Endothelial cell of umbilical vein (primary cell): ENCODE measurements at regions of chr12 and their contacts with region 1.

Region 1: GRCh38 chr12:7933255-7933729 is 2.7 kb downstream of the SLC2A3 start:
- DNase-seq: peak; percentile 93
- H3K4me3 ChIP-seq: peak overlapping the region in 2 of 3 experiments; percentile 22 to 26
- H3K27ac ChIP-seq: peak overlapping the region; percentile 88
- H3K4me1 ChIP-seq: peaks cover 37% of the 10 kb centered on the region
- H3K27me3 ChIP-seq: no peaks in the 10 kb centered on the region
- CTCF ChIP-seq: peak; percentile 58 to 80
- POLR2A ChIP-seq: no peak

Region 2: GRCh38 chr12:7758758-7759140 is 174.5 kb before region 1 on chr12:
- CTCF ChIA-PET with region 1: no interaction called
- POLR2A ChIA-PET with region 1: no interaction called
- dilution Hi-C with region 1: no loop called
- intact Hi-C with region 1: no loop called
- DNase-seq: no peak
- H3K4me3 ChIP-seq: no peak overlapping the region
- H3K27ac ChIP-seq: no peak overlapping the region
- H3K4me1 ChIP-seq: no peaks in the 10 kb centered on the region
- H3K27me3 ChIP-seq: no peaks in the 10 kb centered on the region
- CTCF ChIP-seq: no peak
- POLR2A ChIP-seq: no peak

Region 3: GRCh38 chr12:7781283-7781682 is 152.0 kb before region 1 on chr12:
- CTCF ChIA-PET with region 1: no interaction called
- POLR2A ChIA-PET with region 1: no interaction called
- dilution Hi-C with region 1: no loop called
- intact Hi-C with region 1: no loop called
- DNase-seq: no peak
- H3K4me3 ChIP-seq: no peak overlapping the region
- H3K27ac ChIP-seq: no peak overlapping the region
- H3K4me1 ChIP-seq: no peaks in the 10 kb centered on the region
- H3K27me3 ChIP-seq: peaks cover 0 to 2% of the 10 kb centered on the region in 2 experiments
- CTCF ChIP-seq: no peak
- POLR2A ChIP-seq: no peak

Region 4: GRCh38 chr12:7859552-7859951 is 73.7 kb before region 1 on chr12:
- CTCF ChIA-PET with region 1: interaction called, 10 read pairs
- POLR2A ChIA-PET with region 1: no interaction called
- dilution Hi-C with region 1: no loop called
- intact Hi-C with region 1: loop called (anchors 1 kb)
- DNase-seq: no peak
- H3K4me3 ChIP-seq: no peak overlapping the region
- H3K27ac ChIP-seq: no peak overlapping the region
- H3K4me1 ChIP-seq: no peaks in the 10 kb centered on the region
- H3K27me3 ChIP-seq: no peaks in the 10 kb centered on the region
- CTCF ChIP-seq: no peak
- POLR2A ChIP-seq: no peak

Region 5: DNA sequence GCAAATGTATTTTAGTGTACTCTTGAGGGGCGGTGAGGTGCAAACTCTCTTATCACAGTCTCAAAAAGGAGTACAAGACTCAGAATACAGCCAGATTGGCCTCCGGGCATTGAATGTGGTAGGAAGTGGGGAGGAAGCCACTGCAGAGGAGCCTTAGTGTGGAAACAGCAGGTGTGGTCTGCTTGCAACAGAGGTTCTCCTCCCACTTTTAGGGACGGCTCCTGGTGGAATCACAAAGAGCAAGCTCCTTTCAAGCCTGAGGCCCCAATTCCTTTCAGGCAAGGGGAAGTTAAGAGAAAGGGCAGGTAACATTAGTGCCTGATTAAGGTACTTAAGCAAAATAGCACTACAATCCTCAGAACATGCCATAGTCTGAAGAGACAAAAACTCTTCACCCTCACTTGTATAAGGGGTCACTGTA is 26.4 kb after region 1 on chr12:
- CTCF ChIA-PET with region 1: interaction called, 110 read pairs
- POLR2A ChIA-PET with region 1: interaction called, 135 read pairs
- dilution Hi-C with region 1: no loop called
- intact Hi-C with region 1: loop called (anchors 1 kb)
- DNase-seq: peak; percentile 3
- H3K4me3 ChIP-seq: no peak overlapping the region
- H3K27ac ChIP-seq: no peak overlapping the region
- H3K4me1 ChIP-seq: peaks cover 21% of the 10 kb centered on the region
- H3K27me3 ChIP-seq: no peaks in the 10 kb centered on the region
- CTCF ChIP-seq: no peak
- POLR2A ChIP-seq: no peak

Region 6: GRCh38 chr12:7989827-7990551 is 56.7 kb after region 1 on chr12:
- CTCF ChIA-PET with region 1: interaction called, 132 read pairs
- POLR2A ChIA-PET with region 1: interaction called, 5 read pairs
- dilution Hi-C with region 1: no loop called
- intact Hi-C with region 1: loop called (anchors 1 kb)
- DNase-seq: peak; percentile 73
- H3K4me3 ChIP-seq: no peak overlapping the region
- H3K27ac ChIP-seq: no peak overlapping the region
- H3K4me1 ChIP-seq: peaks cover 11% of the 10 kb centered on the region
- H3K27me3 ChIP-seq: no peaks in the 10 kb centered on the region
- CTCF ChIP-seq: no peak
- POLR2A ChIP-seq: no peak

Region 7: GRCh38 chr12:8026291-8026900 is 93.1 kb after region 1 on chr12:
- CTCF ChIA-PET with region 1: interaction called, 8 read pairs
- POLR2A ChIA-PET with region 1: interaction called, 15 read pairs
- dilution Hi-C with region 1: no loop called
- intact Hi-C with region 1: loop called (anchors 1 kb)
- DNase-seq: peak; percentile 99
- H3K4me3 ChIP-seq: peak overlapping the region; percentile 57 to 97 (median 77)
- H3K27ac ChIP-seq: peak overlapping the region; percentile 100
- H3K4me1 ChIP-seq: peaks cover 3% of the 10 kb centered on the region
- H3K27me3 ChIP-seq: no peaks in the 10 kb centered on the region
- CTCF ChIP-seq: no peak
- POLR2A ChIP-seq: peak; percentile 41

Region 8: DNA sequence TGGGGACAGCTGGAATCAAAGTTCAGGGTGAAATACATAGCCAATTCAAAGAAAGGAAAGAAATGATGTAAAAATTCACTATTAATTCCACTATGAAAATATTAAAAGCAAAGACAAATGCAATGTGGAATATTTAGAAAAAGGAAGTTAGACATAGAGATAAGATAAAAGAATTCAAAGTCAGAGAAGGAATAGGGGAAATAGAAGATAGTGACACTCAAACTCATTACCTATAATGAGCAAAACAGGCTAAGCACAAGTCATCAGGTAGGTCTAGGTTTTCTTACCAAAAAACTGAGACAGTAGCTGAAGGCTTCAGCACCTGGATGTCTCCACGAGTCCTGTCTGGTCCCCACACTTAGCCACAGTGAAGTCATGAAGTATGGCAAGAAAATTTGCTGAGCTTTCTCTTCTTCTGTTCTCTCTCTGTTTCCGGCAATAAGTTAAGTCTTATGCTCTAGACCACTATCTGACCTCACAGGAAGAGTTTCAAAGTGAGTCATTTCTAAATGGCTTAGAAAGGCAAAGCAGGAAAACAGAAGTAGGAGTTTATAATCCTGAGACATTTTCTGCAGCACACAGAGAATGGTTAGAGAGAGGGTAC is 132.8 kb after region 1 on chr12 and contains the start of gene C3AR1:
- CTCF ChIA-PET with region 1: no interaction called
- POLR2A ChIA-PET with region 1: interaction called, 11 read pairs
- dilution Hi-C with region 1: no loop called
- intact Hi-C with region 1: no loop called
- DNase-seq: peak; percentile 83
- H3K4me3 ChIP-seq: peak within 1 kb of the TSS in 1 of 3 experiments; percentile 38
- H3K27ac ChIP-seq: peak within 1 kb of the TSS; percentile 48
- H3K4me1 ChIP-seq: peaks cover 15% of the 10 kb centered on the region
- H3K27me3 ChIP-seq: no peaks in the 10 kb centered on the region
- CTCF ChIP-seq: no peak
- POLR2A ChIP-seq: no peak
- total RNA-seq, gene C3AR1: 0.21 and 0.22 TPM in 2 replicates